Natural killer cell (primary cell): ENCODE measurements at regions of chr7 and their contacts with region 1.

Region 1: DNA sequence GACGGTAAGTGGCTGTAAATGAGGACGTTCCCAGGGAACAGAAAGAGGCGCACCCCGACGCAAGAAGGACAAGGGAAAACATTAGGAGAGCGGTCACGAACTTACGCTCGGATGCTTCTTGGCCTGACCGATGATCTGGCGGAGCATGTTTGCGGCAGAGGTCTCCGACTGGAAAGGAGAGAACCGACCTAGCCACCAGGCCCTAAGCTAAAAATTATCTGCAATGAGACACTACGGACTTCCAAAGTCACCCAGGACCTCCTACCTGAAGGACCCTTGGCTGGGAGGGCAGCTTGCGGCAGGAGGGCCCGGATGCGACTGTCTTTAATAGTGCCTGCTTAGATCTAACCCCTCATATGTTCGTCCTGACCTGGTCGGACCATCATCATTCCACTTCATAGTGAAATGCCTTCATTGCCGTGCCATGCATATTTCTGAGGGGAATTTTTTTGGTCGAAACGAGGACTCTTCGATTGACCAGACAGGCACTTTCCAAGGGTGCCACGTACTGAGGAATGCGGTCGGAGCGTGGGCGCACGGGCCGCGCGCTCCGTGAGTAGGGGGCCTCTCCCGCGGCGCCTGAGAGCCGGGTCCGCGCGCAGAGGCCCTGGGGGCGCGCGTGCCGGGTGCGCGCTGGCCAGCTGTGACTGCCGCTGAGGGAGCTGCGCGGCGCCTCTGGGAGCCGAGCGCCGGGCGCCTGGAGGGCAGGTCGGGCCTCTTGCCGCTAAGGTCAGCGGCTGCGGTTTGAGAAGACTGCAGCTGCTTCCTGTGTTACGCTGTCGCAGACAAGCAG is 33.6 kb upstream of the PHF14 start:
- DNase-seq: peak; percentile 86 to 96
- ATAC-seq: peak; percentile 87 to 97 (median 88)
- H3K4me3 ChIP-seq: peak overlapping the region; percentile 79
- H3K4me3 Mint-ChIP-seq: no peak overlapping the region
- H3K27ac ChIP-seq: peak overlapping the region; percentile 97
- H3K27ac Mint-ChIP-seq: no peak overlapping the region
- H3K4me1 ChIP-seq: peaks cover 13% of the 10 kb centered on the region
- H3K4me1 Mint-ChIP-seq: peaks cover 13 to 15% of the 10 kb centered on the region in 2 donors
- H3K27me3 ChIP-seq: no peaks in the 10 kb centered on the region
- H3K27me3 Mint-ChIP-seq: no peaks in the 10 kb centered on the region
- CTCF ChIP-seq: no peak

Region 2: DNA sequence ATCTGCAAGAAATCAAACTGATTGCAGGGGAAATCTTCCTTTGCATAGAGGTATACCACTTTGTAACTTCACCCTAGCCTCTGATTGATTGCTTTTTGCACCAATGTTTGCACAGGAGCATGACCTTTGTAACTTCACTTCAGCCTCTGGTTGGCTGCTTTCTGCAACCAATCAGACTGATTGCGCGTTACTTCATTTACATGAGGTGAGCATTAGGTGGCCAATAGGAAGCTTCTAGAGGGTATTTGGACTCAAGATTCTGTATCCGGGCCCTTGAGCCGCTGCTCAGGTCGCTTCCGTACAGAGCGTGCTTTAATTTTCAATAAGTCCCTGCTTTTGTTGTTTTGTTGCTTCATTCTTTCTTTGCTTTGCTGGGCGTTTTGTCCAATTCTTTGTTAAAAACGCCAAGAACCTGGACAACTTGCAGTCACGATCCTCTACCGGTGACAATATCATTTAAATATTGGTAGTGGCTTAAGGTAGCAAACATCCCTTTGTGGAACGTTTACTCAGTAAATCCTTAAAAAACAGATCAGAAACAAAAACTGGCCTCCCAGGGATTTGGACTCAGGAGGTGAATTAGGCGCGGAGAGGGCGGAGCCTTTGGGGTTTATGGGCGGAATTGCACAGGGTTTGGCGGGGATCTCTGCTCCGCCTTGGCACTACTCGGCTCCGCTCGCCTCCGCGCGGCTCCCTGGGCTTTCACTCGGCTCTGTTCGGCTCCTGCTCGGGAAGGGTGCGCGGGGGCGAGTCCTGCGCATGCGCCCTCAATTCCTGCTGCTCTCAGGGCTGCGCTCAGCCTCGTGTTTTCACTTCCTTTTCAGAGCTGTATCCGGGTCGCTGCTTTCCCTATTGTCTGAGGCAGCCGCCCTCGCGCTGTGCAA is 33.2 kb after region 1 on chr7 and contains the start of gene PHF14:
- intact Hi-C with region 1: loop called (anchors 1 kb)
- DNase-seq: peak; percentile 81 to 99
- ATAC-seq: peak; percentile 95 to 97 (median 95)
- H3K4me3 ChIP-seq: peak within 1 kb of the TSS; percentile 58
- H3K4me3 Mint-ChIP-seq: peak within 1 kb of the TSS; percentile 92
- H3K27ac ChIP-seq: peak within 1 kb of the TSS; percentile 53
- H3K27ac Mint-ChIP-seq: peak within 1 kb of the TSS; percentile 85 to 88
- H3K4me1 ChIP-seq: peaks cover 13% of the 10 kb centered on the region
- H3K4me1 Mint-ChIP-seq: peaks cover 31 to 36% of the 10 kb centered on the region in 2 donors
- H3K27me3 ChIP-seq: no peaks in the 10 kb centered on the region
- H3K27me3 Mint-ChIP-seq: peaks cover 13 to 19% of the 10 kb centered on the region in 2 donors
- CTCF ChIP-seq: no peak
- total RNA-seq, gene PHF14: 23.6 to 30.8 (median 27.7) TPM